ENCODE measurements at regions of chr1 and their contacts with region 1.

Region 1: GRCh38 chr1:23979878-23980724 is at the start of gene SRSF10:
- DNase-seq: peak; percentile 96 to 99 (median 97)
- H3K4me3 ChIP-seq: peak within 1 kb of the TSS; percentile 75
- H3K4me3 Mint-ChIP-seq: peak within 1 kb of the TSS; percentile 89 to 96 (median 91)
- H3K27ac ChIP-seq: peak within 1 kb of the TSS; percentile 92
- H3K27ac Mint-ChIP-seq: peak within 1 kb of the TSS; percentile 94 to 98 (median 96)
- H3K4me1 ChIP-seq: peaks cover 41% of the 10 kb centered on the region
- H3K4me1 Mint-ChIP-seq: peaks cover 52 to 57% (median 52%) of the 10 kb centered on the region in 3 donors
- H3K27me3 ChIP-seq: no peaks in the 10 kb centered on the region
- H3K27me3 Mint-ChIP-seq: no peaks in the 10 kb centered on the region
- total RNA-seq, gene SRSF10: 190 to 199 TPM

Region 2: DNA sequence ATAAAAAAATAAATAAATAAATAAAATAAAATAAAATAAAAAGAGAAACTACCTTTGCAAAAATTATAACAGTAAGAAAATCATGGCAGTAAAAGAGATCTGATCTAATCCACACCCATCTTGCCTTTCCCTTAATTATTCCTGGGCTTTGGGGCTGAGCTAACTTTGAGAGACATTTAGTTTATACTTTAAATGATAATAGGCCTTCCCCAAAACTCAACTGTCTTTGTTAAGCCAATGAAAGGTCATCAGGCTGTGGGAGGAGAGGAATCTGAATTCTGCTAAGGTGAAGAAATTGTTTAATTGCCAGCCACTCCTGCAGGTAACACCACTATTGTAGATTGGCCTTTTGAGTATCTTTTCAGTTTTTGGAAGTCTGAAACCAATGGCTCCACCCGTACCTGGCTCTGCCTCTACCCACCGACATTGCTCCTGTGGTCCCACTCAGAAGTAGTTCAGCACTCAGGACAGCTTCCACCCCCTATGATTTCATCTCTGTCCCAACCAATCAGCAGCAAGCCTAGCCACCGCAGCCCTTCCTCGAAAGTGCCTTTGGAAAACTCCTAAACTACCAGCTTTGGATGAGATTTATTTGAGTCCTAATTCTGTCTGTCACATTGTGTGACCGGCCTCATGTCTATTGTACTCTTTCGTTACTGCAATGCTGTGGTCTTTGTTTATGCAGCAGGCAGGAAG is 43.5 kb before region 1 on chr1:
- CTCF ChIA-PET with region 1: no interaction called
- POLR2A ChIA-PET with region 1: no interaction called
- DNase-seq: no peak
- H3K4me3 ChIP-seq: no peak overlapping the region
- H3K4me3 Mint-ChIP-seq: no peak overlapping the region
- H3K27ac ChIP-seq: no peak overlapping the region
- H3K27ac Mint-ChIP-seq: no peak overlapping the region
- H3K4me1 ChIP-seq: no peaks in the 10 kb centered on the region
- H3K4me1 Mint-ChIP-seq: no peaks in the 10 kb centered on the region
- H3K27me3 ChIP-seq: no peaks in the 10 kb centered on the region
- H3K27me3 Mint-ChIP-seq: peaks cover 2 to 9% of the 10 kb centered on the region in 2 donors

Region 3: GRCh38 chr1:23959041-23959460 is 21.1 kb before region 1 on chr1:
- CTCF ChIA-PET with region 1: interaction called, 5 read pairs
- POLR2A ChIA-PET with region 1: interaction called, 34 read pairs
- DNase-seq: peak; percentile 86 to 95 (median 92)
- H3K4me3 ChIP-seq: peak overlapping the region; percentile 69
- H3K4me3 Mint-ChIP-seq: peak overlapping the region; percentile 99 to 100 (median 100)
- H3K27ac ChIP-seq: peak overlapping the region; percentile 99
- H3K27ac Mint-ChIP-seq: peak overlapping the region; percentile 99 to 100 (median 100)
- H3K4me1 ChIP-seq: peaks cover 39% of the 10 kb centered on the region
- H3K4me1 Mint-ChIP-seq: peaks cover 48 to 61% (median 60%) of the 10 kb centered on the region in 3 donors
- H3K27me3 ChIP-seq: no peaks in the 10 kb centered on the region
- H3K27me3 Mint-ChIP-seq: no peaks in the 10 kb centered on the region

Measured in CD8-positive, alpha-beta memory T cell (primary cell).